Activated CD4-positive, alpha-beta memory T cell treated with anti-CD3 and anti-CD28 coated beads for 36 hours (primary cell): ENCODE measurements at regions of chr12 and their contacts with region 1.

Region 1: GRCh38 chr12:93677195-93678064 is at the start of gene CRADD:
- DNase-seq: peak; percentile 90
- H3K4me3 Mint-ChIP-seq: peak within 1 kb of the TSS; percentile 93
- H3K27ac Mint-ChIP-seq: peak within 1 kb of the TSS; percentile 100
- H3K4me1 Mint-ChIP-seq: peaks cover 41% of the 10 kb centered on the region
- H3K27me3 Mint-ChIP-seq: peaks cover 11% of the 10 kb centered on the region
- total RNA-seq, gene CRADD: 8.9 to 10.4 TPM

Region 2: DNA sequence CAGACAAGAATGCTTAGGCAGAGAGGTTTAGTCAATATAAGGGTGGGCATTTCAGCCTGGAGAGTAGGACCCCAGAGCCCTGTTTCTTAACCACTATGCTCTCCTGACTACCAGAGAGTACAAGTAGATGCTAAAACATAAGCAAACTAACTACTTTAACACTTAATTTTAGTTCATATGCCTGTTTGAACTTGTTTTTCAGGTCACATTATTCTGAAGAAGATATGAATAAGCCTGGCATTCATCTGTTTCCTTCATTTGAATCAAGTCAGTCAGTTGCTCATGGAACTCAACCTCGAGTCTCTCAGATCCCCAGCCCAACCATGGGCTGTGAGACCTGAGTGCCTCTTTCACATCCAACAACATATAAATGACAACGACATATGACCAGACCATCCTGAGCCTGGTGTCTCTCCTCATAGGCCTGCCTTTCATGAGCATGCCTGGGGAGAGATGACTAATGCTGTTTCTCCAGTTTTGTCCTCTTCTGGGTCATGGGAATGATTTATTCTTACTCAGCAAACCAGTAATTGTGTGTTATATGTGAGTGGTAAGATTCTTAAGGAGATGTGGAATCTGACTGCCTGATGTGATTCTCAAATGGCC is 1280.7 kb before region 1 on chr12:
- CTCF ChIA-PET with region 1: no interaction called
- POLR2A ChIA-PET with region 1: no interaction called
- intact Hi-C with region 1: loop called (anchors 10 kb)
- DNase-seq: peak; percentile 61
- H3K4me3 Mint-ChIP-seq: no peak overlapping the region
- H3K27ac Mint-ChIP-seq: peak overlapping the region; percentile 86
- H3K4me1 Mint-ChIP-seq: peaks cover 90% of the 10 kb centered on the region
- H3K27me3 Mint-ChIP-seq: no peaks in the 10 kb centered on the region

Region 3: GRCh38 chr12:93378373-93379325 is 298.8 kb before region 1 on chr12:
- CTCF ChIA-PET with region 1: no interaction called
- POLR2A ChIA-PET with region 1: no interaction called
- intact Hi-C with region 1: loop called (anchors 5 kb)
- DNase-seq: peak; percentile 74
- H3K4me3 Mint-ChIP-seq: peak overlapping the region; percentile 99
- H3K27ac Mint-ChIP-seq: peak overlapping the region; percentile 99
- H3K4me1 Mint-ChIP-seq: peaks cover 40% of the 10 kb centered on the region
- H3K27me3 Mint-ChIP-seq: no peaks in the 10 kb centered on the region

Region 4: DNA sequence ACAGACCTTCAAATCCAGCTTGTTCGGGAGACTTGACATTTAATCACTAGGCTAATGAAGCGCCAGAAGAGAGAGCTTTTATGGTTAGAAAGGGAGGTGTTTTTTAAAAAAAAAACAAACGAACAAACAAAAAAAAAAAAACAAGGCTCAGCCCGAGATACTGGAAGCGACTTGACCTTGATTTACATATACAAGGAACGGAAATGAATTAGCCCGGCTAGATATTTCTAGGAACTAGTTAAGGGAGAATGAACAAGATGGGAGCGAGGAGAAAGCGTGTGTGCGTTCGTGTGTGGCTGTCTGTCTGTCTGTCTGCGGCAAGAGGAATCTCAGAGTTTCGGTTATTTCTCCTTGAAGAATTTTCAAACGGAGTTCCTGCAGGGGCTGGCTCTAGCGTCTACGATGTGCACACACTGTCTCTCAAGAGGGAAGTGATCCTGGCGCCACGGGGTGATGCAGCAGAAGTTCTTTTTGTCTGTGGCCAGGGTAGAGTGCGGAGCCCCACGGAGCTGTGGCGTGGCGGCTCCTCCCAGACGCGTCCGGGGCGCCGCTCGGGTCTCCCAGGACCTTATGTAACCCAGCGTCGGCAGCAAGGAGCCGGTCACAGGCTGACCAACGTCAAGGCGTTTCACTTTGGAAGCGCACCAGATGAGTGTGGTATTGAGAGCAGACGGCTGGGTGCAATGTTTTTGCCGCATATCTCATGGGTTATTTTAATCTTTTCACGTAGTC is 86.1 kb before region 1 on chr12:
- CTCF ChIA-PET with region 1: no interaction called
- POLR2A ChIA-PET with region 1: no interaction called
- intact Hi-C with region 1: loop called (anchors 5 kb)
- DNase-seq: peak; percentile 48
- H3K4me3 Mint-ChIP-seq: peak overlapping the region; percentile 87
- H3K27ac Mint-ChIP-seq: no peak overlapping the region
- H3K4me1 Mint-ChIP-seq: peaks cover 15% of the 10 kb centered on the region
- H3K27me3 Mint-ChIP-seq: peaks cover 38% of the 10 kb centered on the region

Region 5: DNA sequence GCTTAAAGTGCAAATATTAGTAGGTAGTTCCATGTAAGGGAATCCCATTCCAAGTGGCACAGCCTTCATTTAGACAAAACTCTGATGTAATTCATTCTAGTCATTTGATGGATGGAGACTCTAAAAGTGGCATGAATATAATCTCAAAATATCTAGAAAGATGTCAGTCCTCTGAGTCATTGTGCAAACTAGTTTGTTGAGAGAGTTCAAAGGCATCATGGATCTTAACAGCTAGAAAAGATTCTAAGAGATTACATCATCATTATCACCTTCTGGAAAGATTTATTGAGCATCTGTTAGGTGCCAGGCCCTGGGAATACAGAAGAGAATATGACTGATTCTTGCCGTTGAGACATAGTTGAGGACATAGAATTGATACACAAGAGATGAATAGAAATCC is 30.4 kb after region 1 on chr12:
- CTCF ChIA-PET with region 1: no interaction called
- POLR2A ChIA-PET with region 1: no interaction called
- intact Hi-C with region 1: no loop called
- DNase-seq: no peak
- H3K4me3 Mint-ChIP-seq: no peak overlapping the region
- H3K27ac Mint-ChIP-seq: no peak overlapping the region
- H3K4me1 Mint-ChIP-seq: peaks cover 18% of the 10 kb centered on the region
- H3K27me3 Mint-ChIP-seq: no peaks in the 10 kb centered on the region

Region 6: DNA sequence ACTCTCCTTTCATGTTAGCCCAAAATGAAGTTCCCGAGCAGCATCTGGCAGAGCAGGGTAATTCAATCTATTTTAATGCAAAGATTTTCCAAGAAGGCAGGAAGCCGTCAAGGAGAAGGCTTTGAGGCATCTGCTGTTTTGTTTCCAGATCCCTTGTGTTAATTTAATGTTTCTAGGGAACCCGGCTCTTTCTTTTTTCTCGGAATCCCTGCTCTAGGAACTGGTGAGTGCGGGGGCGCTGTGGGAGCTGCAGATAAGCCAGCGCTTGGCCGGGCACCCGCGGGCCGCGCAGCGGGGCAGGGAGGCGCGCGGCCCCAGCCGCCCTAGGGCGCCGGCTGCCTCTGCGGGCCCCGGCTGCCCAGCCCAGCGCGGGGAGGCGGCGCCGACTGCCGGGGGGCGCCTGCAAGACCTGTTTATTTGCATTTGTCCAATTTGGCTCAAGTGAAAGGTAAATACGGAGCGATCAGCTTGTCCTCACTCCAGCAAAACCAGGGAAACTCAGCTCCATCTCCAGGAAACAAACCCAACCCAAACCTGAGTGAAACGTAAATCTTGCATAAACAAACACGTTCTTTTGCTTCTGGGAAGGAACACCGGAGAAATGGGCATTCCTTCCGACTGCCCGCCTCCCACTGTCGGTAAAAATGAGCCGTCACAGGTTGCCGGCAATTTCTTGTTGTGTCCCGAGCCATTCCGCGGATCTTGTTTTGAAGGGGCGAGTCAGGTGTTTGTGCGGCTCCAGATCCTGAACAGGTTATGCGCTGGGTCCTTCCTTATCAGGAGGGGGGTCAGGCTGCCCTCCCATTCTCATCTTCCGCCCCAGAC is 64.9 kb after region 1 on chr12:
- CTCF ChIA-PET with region 1: no interaction called
- POLR2A ChIA-PET with region 1: no interaction called
- intact Hi-C with region 1: loop called (anchors 1 kb)
- DNase-seq: peak; percentile 77
- H3K4me3 Mint-ChIP-seq: peak overlapping the region; percentile 74
- H3K27ac Mint-ChIP-seq: peak overlapping the region; percentile 81
- H3K4me1 Mint-ChIP-seq: peaks cover 35% of the 10 kb centered on the region
- H3K27me3 Mint-ChIP-seq: no peaks in the 10 kb centered on the region